Heart right ventricle (tissue), 16 donors: ENCODE measurements at regions of chr7 and their contacts with region 1.

Region 1: GRCh38 chr7:22559829-22560489 is 60.0 kb upstream of the STEAP1B start:
- DNase-seq: peak; percentile 45 to 82
- ATAC-seq: peak; percentile 64 to 74 (median 70)
- H3K4me3 ChIP-seq: no peak overlapping the region
- H3K27ac ChIP-seq: peak overlapping the region in 6 of 10 donors; percentile 69 to 93 (median 86)
- H3K4me1 ChIP-seq: peaks cover 8 to 52% (median 49%) of the 10 kb centered on the region in 9 donors
- H3K27me3 ChIP-seq: peaks cover 0 to 12% (median 0%) of the 10 kb centered on the region in 7 donors
- CTCF ChIP-seq: peak; percentile 82 to 96 (median 89)

Region 2: GRCh38 chr7:22651534-22652243 is 91.7 kb after region 1 on chr7:
- intact Hi-C with region 1: loop called in 1 of 10 experiments (anchors 10 kb)
- DNase-seq: no peak
- ATAC-seq: peak in 5 of 8 donors; percentile 14 to 73 (median 54)
- H3K4me3 ChIP-seq: no peak overlapping the region
- H3K27ac ChIP-seq: peak overlapping the region in 3 of 10 donors; percentile 18 to 54 (median 28)
- H3K4me1 ChIP-seq: peaks cover 0 to 30% (median 19%) of the 10 kb centered on the region in 9 donors
- H3K27me3 ChIP-seq: no peaks in the 10 kb centered on the region
- CTCF ChIP-seq: no peak

Region 3: GRCh38 chr7:22782616-22783232 is 222.8 kb after region 1 on chr7:
- intact Hi-C with region 1: loop called in 8 of 10 experiments (anchors 2 to 10 kb)
- DNase-seq: peak; percentile 51 to 65
- ATAC-seq: peak in 6 of 8 donors; percentile 46 to 88 (median 60)
- H3K4me3 ChIP-seq: no peak overlapping the region
- H3K27ac ChIP-seq: no peak overlapping the region
- H3K4me1 ChIP-seq: peaks cover 0 to 9% (median 0%) of the 10 kb centered on the region in 9 donors
- H3K27me3 ChIP-seq: no peaks in the 10 kb centered on the region
- CTCF ChIP-seq: peak; percentile 42 to 83 (median 74)

Region 4: DNA sequence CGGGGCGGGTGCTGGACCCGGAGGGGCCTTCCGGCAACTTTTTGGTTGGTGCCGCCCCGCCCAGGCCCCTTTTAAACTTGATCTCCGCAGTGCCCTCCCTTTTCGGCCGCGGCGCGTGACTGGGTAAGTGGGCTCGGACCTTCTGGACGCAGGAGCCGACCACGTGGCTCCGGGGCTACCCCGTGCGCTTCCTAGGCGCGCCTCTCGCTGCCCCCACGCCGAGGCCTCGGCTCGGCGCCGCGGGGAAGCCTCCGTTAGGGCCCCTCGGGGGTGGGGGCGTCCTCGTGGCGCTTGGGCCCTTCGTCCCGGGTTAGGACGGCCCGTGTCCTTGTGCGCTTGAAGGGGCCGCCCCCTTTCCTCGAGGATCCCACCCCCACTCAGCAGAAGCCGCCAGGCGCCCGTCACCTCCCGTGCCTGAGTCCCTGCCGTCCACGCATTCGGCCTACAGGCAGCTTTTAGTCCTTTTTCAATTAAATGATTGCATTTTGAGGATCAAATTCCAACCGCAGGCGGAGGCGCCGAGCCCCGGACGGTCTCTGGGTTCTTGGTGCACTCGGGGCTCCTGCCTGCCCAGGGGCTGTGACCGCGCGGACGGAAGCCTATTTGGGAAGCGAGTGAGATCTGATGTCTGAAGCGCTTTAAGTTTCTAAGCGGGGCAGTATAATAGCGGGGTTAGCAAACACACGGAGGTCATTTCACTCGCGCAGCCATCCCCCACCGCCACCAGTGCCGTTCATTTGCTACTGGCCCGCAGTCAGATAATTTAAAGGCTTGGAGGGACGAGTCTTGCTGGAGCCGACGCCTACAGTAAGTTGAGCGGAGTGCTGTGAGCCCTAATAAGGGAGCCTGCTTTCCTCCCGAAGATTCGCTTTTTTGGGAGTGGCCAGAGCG is 294.4 kb after region 1 on chr7:
- intact Hi-C with region 1: loop called in 4 of 10 experiments (anchors 2 to 5 kb)
- DNase-seq: peak; percentile 88 to 89
- ATAC-seq: peak; percentile 84 to 97 (median 88)
- H3K4me3 ChIP-seq: peak overlapping the region; percentile 61 to 87 (median 74)
- H3K27ac ChIP-seq: peak overlapping the region; percentile 90 to 99 (median 95)
- H3K4me1 ChIP-seq: peaks cover 0 to 45% (median 36%) of the 10 kb centered on the region in 9 donors
- H3K27me3 ChIP-seq: no peaks in the 10 kb centered on the region
- CTCF ChIP-seq: peak in 8 of 9 donors; percentile 5 to 97 (median 94)

Region 5: DNA sequence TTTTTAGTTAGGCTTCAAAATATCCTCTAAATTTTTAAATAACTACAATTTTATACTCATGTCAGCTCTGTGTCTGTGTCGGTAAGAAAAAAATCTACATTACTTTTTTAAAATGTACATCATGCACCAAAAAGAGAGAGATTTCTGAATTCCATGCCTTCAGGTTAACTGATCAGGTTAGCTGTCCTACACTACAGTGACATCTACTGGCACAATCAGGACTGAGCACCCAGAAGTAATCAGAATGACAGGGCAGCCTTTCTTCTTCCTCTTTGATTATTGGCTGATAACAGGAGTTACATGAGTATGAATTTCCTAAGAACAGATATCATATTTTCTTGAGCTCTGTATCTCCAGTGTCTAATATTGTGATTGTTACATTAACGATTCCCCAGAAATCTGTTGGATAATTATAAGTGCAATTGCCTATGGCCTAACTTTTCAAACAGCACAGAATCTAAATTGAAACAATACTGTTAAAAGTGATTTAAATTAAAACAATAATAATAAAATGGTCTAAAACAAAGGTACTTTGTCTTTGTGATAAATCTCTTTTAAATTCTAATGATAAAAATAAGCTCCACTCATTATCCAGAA is 495.7 kb after region 1 on chr7:
- intact Hi-C with region 1: loop called in 9 of 10 experiments (anchors 1 to 5 kb)
- DNase-seq: peak in 1 of 2 donors; percentile 48
- ATAC-seq: peak in 7 of 8 donors; percentile 51 to 84 (median 64)
- H3K4me3 ChIP-seq: no peak overlapping the region
- H3K27ac ChIP-seq: no peak overlapping the region
- H3K4me1 ChIP-seq: peaks cover 0 to 9% (median 0%) of the 10 kb centered on the region in 9 donors
- H3K27me3 ChIP-seq: no peaks in the 10 kb centered on the region
- CTCF ChIP-seq: peak; percentile 81 to 97 (median 94)